A673 (cell line): ENCODE measurements at regions of chr9 and their contacts with region 1.

Region 1: GRCh38 chr9:101311758-101312420 is 72.9 kb downstream of the BAAT start:
- DNase-seq: peak; percentile 87
- H3K4me3 ChIP-seq: no peak overlapping the region
- H3K27ac ChIP-seq: no peak overlapping the region
- H3K4me1 ChIP-seq: peaks cover 18% of the 10 kb centered on the region
- H3K27me3 ChIP-seq: no peaks in the 10 kb centered on the region
- CTCF ChIP-seq: peak; percentile 73

Region 2: GRCh38 chr9:101119206-101119819 is 192.6 kb before region 1 on chr9:
- CTCF ChIA-PET with region 1: interaction called, 15 read pairs
- POLR2A ChIA-PET with region 1: no interaction called
- intact Hi-C with region 1: loop called (anchors 1 kb)
- DNase-seq: peak; percentile 56
- H3K4me3 ChIP-seq: no peak overlapping the region
- H3K27ac ChIP-seq: no peak overlapping the region
- H3K4me1 ChIP-seq: no peaks in the 10 kb centered on the region
- H3K27me3 ChIP-seq: peaks cover 4% of the 10 kb centered on the region
- CTCF ChIP-seq: peak; percentile 80

Region 3: DNA sequence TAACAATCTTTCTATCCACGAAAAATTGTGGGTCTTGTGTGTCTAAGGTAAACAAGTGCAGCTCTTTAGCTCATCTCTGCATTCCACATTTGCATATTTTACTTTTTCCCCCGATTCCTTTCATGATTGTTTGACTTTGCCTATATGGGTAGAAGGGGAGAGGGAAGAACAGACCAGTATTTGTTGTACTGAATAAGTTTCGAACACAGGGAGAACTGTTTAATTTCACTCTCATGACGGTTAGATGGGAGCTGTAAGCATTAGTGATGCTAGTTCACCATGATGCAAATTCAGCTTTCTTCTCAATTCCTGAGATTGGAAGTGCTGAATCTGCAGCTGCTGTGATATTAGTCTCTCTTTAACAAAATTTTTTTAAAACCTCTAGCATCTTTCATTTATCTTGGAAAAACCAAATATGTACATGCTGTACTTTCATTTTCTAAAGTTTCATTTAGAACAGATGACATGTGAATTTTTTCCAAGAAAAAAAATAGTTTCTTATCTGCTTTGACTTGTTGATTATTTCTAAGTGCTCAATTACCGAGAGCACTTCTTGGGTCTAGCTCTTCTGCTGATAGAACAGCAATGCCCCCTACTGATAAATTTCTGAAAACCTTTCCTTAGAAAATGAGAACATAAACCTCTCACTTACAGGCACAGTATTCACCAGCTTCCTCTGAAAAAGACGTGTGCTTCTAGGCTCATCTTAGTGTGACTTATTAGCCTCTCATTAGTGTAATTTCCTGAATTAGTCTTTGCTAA is 76.6 kb before region 1 on chr9:
- CTCF ChIA-PET with region 1: no interaction called
- POLR2A ChIA-PET with region 1: no interaction called
- intact Hi-C with region 1: loop called (anchors 5 kb)
- DNase-seq: peak; percentile 49
- H3K4me3 ChIP-seq: no peak overlapping the region
- H3K27ac ChIP-seq: no peak overlapping the region
- H3K4me1 ChIP-seq: no peaks in the 10 kb centered on the region
- H3K27me3 ChIP-seq: no peaks in the 10 kb centered on the region
- CTCF ChIP-seq: peak; percentile 65

Region 4: DNA sequence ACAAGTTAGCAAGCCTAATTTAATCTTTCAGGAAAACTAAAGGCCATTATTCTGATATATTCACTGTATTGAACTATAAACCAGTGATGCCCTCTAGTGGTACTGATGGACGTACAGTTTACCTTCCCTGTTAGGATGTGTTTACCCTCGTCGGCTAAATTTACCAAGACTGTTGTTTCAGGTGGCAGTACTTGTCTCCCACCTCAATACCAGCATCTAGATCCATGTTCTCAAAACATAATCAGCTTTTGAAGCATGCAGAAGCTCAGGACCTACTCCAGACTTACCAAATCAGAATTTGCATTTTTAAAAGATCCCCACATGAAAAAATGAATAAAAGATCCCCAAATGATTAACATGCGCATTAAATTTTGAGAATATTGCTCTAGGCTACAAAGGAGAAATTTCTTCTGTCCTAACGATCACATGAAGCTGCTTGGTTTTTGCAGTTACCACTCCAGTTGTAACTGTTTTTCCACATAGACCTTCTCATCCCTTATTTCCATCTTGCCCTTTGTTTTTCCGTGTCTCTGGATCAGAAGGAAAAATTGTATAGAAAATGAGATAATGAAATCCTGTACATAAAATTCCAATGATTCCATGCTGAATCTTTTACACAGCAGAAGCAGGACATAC is 76.1 kb after region 1 on chr9:
- CTCF ChIA-PET with region 1: interaction called, 5 read pairs
- POLR2A ChIA-PET with region 1: no interaction called
- intact Hi-C with region 1: loop called (anchors 1 kb)
- DNase-seq: peak; percentile 70
- H3K4me3 ChIP-seq: no peak overlapping the region
- H3K27ac ChIP-seq: no peak overlapping the region
- H3K4me1 ChIP-seq: peaks cover 4% of the 10 kb centered on the region
- H3K27me3 ChIP-seq: no peaks in the 10 kb centered on the region
- CTCF ChIP-seq: peak; percentile 79